Activated T-helper 1 cell treated with anti-CD3 and anti-CD28 coated beads, Interleukin-12 subunit alpha, Interleukin-12 subunit beta, Interleukin-2, Interleukin-4 antibody, amounts not matched to agents 30 ng/mL and 10 ng/mL and 1 ng/mL, durations not matched to agents 14 hours and 24 hours and 36 hours (primary cell): ENCODE measurements at regions of chr10 and their contacts with region 1.

Region 1: GRCh38 chr10:100508691-100509150 is 10.9 kb downstream of the SEC31B start:
- DNase-seq: peak; percentile 50
- H3K4me3 Mint-ChIP-seq: peak overlapping the region; percentile 77
- H3K27ac Mint-ChIP-seq: peak overlapping the region; percentile 88
- H3K4me1 Mint-ChIP-seq: peaks cover 92% of the 10 kb centered on the region
- H3K27me3 Mint-ChIP-seq: no peaks in the 10 kb centered on the region

Region 2: DNA sequence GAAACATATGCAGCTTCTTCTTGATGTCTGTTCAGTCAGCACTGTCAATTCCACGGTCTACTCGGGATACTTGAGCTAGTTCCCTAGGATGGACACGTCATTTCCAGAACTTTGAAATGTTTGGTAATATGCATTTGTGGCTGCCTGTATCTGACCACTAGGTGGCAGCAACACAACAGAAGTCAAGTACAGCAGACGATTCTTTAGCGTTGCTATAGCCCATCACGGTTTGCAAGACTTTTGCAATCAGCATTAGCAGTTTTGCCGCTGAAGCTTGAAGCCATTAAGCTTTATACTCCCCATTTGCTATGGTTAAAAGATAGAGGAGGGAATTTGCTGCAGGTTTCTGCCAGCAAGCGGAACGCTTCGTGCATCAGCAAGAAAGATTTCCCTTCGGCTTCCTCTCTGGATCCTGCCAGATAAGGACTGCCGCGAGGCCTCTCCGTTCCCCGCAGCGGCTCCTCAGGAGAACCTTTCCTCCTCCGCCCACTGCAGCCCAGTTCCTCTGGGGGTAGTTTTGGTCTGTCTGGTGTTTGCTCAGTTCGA is 662.8 kb before region 1 on chr10:
- intact Hi-C with region 1: loop called (anchors 5 kb)
- DNase-seq: peak; percentile 59
- H3K4me3 Mint-ChIP-seq: no peak overlapping the region
- H3K27ac Mint-ChIP-seq: no peak overlapping the region
- H3K4me1 Mint-ChIP-seq: peaks cover 11% of the 10 kb centered on the region
- H3K27me3 Mint-ChIP-seq: no peaks in the 10 kb centered on the region

Region 3: DNA sequence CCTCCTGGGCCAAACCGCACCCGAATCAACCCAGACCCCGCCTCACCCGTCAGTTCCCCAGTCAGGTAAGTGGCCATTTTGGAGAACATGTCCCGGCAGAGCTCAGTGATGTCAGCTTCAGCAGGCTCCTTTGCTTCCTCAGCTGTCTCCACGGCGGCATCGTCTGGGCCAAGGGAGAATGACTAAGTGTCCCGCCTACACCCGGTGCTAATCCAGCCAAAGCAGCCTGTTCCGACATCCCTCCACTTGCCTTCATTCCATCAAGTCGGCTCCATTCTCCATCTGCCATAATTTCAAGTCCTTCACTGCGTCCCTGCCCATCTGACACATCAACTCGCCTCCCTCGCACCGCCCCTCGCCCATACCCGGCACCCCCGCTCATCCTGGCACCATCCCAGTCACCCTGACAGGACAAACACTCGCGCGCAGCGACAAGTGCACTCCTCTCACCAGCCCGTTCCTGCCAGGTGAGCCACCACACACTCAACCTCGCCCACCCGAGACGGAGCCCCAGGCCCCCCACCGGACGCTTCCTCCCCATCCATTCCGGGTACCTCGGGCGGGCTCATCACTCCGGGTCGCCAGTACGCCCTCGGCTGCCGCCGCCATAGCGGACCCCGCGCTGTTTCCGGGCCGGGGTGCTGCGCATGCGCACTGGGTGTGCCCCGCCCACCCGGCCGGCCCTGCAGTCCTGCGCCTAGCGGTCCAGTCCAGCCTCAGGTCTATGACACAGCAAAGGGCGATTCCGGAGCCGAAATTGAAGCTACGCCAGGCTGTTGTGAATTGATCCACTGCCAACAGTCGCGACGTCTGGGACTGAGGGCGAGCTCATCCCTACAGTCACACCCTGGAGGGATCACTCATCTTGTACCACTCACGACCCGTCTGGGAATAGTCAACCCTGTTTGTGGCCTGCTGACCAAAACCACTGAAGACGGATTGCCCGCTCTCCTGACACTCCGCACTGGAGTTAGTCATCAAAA is 222.4 kb before region 1 on chr10 and contains the start of gene BLOC1S2:
- intact Hi-C with region 1: loop called (anchors 1 kb)
- DNase-seq: peak; percentile 91
- H3K4me3 Mint-ChIP-seq: peak within 1 kb of the TSS; percentile 99
- H3K27ac Mint-ChIP-seq: peak within 1 kb of the TSS; percentile 99
- H3K4me1 Mint-ChIP-seq: peaks cover 28% of the 10 kb centered on the region
- H3K27me3 Mint-ChIP-seq: peaks cover 3% of the 10 kb centered on the region
- total RNA-seq, gene BLOC1S2: 65.7 and 66.5 TPM in 2 replicates

Region 4: DNA sequence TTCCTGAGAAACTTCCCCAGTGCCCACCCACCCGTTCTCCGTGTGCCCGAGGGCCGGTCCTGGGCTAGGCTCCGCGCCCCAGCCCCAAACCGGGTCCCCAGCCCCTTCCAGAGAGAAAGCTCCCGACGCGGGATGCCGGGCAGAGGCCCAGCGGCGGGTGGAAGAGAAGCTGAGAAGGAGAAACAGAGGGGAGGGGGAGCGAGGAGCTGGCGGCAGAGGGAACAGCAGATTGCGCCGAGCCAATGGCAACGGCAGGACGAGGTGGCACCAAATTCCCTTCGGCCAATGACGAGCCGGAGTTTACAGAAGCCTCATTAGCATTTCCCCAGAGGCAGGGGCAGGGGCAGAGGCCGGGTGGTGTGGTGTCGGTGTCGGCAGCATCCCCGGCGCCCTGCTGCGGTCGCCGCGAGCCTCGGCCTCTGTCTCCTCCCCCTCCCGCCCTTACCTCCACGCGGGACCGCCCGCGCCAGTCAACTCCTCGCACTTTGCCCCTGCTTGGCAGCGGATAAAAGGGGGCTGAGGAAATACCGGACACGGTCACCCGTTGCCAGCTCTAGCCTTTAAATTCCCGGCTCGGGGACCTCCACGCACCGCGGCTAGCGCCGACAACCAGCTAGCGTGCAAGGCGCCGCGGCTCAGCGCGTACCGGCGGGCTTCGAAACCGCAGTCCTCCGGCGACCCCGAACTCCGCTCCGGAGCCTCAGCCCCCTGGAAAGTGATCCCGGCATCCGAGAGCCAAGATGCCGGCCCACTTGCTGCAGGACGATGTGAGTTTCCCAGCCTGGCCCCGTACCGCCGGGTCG is 161.8 kb before region 1 on chr10 and contains the start of gene SCD:
- intact Hi-C with region 1: loop called (anchors 1 kb)
- DNase-seq: peak; percentile 88
- H3K4me3 Mint-ChIP-seq: peak within 1 kb of the TSS; percentile 100
- H3K27ac Mint-ChIP-seq: peak within 1 kb of the TSS; percentile 99
- H3K4me1 Mint-ChIP-seq: peaks cover 72% of the 10 kb centered on the region
- H3K27me3 Mint-ChIP-seq: no peaks in the 10 kb centered on the region
- total RNA-seq, gene SCD: 194 TPM in 2 replicates

Region 5: GRCh38 chr10:100481462-100482081 is 27.1 kb before region 1 on chr10:
- intact Hi-C with region 1: loop called (anchors 1 kb)
- DNase-seq: peak; percentile 85
- H3K4me3 Mint-ChIP-seq: peak overlapping the region; percentile 79
- H3K27ac Mint-ChIP-seq: peak overlapping the region; percentile 42
- H3K4me1 Mint-ChIP-seq: peaks cover 41% of the 10 kb centered on the region
- H3K27me3 Mint-ChIP-seq: no peaks in the 10 kb centered on the region

Region 6: GRCh38 chr10:100518761-100519241 is 10.1 kb after region 1 on chr10:
- intact Hi-C with region 1: loop called (anchors 1 kb)
- DNase-seq: peak; percentile 49
- H3K4me3 Mint-ChIP-seq: no peak overlapping the region
- H3K27ac Mint-ChIP-seq: no peak overlapping the region
- H3K4me1 Mint-ChIP-seq: peaks cover 28% of the 10 kb centered on the region
- H3K27me3 Mint-ChIP-seq: no peaks in the 10 kb centered on the region

Region 7: DNA sequence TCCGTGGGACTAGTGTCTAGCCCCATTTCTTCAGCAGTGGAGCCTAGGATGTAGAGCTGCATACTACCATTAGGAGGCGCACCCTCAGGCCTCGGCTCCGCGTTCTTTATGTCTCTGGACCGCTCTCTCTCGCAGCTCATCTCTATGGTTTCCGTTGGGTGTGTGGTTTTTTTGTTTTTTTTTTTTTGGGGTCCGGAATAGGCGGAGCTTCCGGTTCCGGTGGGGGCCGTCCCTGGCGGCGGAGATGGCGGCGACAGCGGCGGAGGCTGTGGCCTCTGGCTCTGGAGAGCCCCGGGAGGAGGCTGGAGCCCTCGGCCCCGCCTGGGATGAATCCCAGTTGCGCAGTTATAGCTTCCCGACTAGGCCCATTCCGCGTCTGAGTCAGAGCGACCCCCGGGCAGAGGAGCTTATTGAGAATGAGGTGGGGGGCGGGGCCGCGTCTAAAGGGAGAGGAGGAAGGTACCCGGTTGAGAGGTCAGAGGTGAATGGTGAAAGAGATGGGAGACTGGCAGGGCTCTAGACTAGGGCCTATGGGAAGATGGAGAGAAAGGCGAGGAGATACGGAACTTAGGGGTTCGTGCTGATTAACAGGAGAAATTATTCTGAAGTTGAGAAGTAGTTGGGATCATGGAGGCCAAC is 27.1 kb after region 1 on chr10 and contains the start of gene HIF1AN:
- intact Hi-C with region 1: loop called (anchors 1 kb)
- DNase-seq: peak; percentile 90
- H3K4me3 Mint-ChIP-seq: no peak within 1 kb of the TSS
- H3K27ac Mint-ChIP-seq: no peak within 1 kb of the TSS
- H3K4me1 Mint-ChIP-seq: peaks cover 16% of the 10 kb centered on the region
- H3K27me3 Mint-ChIP-seq: no peaks in the 10 kb centered on the region
- total RNA-seq, gene HIF1AN: 46.5 and 54.1 TPM in 2 replicates